ENCODE measurements at regions of chr13 and their contacts with region 1.

Region 1: GRCh38 chr13:43905435-43906031 is 25.8 kb downstream of the LACC1 start:
- DNase-seq: no peak
- ATAC-seq: peak; percentile 65

Region 2: GRCh38 chr13:44050450-44051063 is 145.0 kb after region 1 on chr13:
- intact Hi-C with region 1: loop called (anchors 10 kb)
- DNase-seq: no peak
- ATAC-seq: no peak

Region 3: GRCh38 chr13:44435142-44435982 is 529.8 kb after region 1 on chr13:
- intact Hi-C with region 1: loop called (anchors 2 kb)
- DNase-seq: peak; percentile 93
- ATAC-seq: peak; percentile 77

Region 4: DNA sequence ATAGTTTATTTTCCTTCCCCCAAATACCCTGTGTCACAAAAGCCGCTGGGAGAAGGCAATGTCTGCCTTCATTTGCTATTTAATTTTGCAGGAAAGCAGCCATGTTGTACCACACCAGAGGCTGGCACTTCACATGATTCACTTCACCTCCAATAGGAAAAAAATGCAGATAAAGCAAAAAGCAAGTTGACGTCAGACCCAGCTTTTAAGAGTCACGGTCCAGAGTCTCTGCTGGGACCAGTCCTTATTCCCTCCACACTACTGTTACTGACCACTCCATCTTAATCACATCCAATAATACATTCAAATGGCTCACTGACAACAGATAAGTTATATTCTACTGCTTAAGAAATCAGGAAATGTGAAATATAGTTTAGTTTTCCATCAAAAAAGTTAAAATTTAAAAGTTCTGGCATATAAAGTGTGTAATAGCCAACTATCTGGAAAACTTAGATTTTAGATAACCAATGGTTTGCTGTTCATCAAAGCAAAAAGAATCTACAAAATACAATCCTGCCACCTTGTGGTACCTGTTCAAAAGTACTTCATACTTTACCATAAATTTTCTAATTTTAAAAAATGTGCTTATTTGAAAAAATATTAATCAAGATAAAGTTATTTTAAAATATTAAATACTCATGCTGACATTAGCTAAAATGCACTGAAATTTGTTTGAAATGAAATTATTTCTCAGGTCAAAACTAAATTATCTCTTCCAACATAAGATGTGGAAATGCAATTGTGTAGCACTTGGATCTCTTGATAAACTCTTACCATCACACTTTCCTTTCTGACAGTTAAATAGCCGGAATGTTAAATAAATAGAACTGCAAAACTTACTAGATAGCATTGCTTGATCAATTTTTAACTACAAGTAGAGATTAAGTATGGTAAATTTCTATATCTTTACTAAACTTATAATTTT is 565.4 kb after region 1 on chr13:
- intact Hi-C with region 1: loop called (anchors 10 kb)
- DNase-seq: no peak
- ATAC-seq: no peak

Measured in left ventricle myocardium superior (tissue), 1 donor.